ENCODE measurements at regions of chr1 and their contacts with region 1.

Region 1: DNA sequence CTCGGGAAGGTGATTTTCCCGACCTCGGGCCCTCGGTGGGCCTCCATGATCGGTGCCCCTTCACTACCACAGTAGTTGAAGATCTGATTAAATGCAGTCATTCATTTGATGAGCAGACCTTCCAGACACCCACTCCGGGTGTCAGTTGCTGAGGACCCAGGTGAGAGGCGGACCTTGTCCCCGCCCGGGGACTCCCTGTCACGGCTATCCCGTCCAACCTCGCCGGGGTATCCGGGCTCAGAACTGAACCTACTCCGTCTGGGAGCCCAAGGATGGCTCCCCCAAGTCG is 22.6 kb downstream of the RNU1-3 start:
- DNase-seq: no peak
- ATAC-seq: peak; percentile 18 to 30
- H3K4me3 ChIP-seq: peak overlapping the region; percentile 67 to 99 (median 75)
- H3K27ac ChIP-seq: peak overlapping the region; percentile 83 to 95 (median 86)
- H3K4me1 ChIP-seq: peaks cover 46 to 58% of the 10 kb centered on the region in 2 donors
- H3K27me3 ChIP-seq: peaks cover 0 to 9% (median 5%) of the 10 kb centered on the region in 3 donors
- CTCF ChIP-seq: no peak
- POLR2A ChIP-seq: no peak

Region 2: DNA sequence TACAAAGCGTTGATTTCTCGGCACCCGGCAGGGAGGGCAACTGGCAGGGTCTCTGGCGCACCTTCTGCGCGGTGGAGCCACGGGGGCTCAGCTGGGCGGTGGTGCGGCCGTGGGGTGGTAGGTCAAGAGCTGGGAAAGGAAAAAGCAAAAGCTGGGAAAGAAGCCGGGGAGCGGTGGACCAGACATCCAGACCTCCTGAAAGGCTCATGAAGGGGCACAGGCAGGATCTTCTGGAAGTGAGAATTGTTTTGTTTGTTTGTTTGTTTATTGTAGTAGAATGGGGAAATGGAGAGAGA is 122.9 kb before region 1 on chr1:
- in situ Hi-C with region 1: loop called in 1 of 4 experiments (anchors 25 kb)
- intact Hi-C with region 1: no loop called
- DNase-seq: no peak
- ATAC-seq: no peak
- H3K4me3 ChIP-seq: no peak overlapping the region
- H3K27ac ChIP-seq: no peak overlapping the region
- H3K4me1 ChIP-seq: peaks cover 0 to 4% of the 10 kb centered on the region in 2 donors
- H3K27me3 ChIP-seq: peaks cover 5 to 26% (median 15%) of the 10 kb centered on the region in 3 donors
- CTCF ChIP-seq: no peak
- POLR2A ChIP-seq: no peak

Region 3: GRCh38 chr1:16613185-16614147 is 30.7 kb before region 1 on chr1 and contains the start of gene NBPF1:
- in situ Hi-C with region 1: no loop called
- intact Hi-C with region 1: loop called (anchors 2 kb)
- DNase-seq: peak; percentile 92 to 96
- ATAC-seq: peak; percentile 95 to 96
- H3K4me3 ChIP-seq: peak within 1 kb of the TSS; percentile 57 to 82 (median 74)
- H3K27ac ChIP-seq: peak within 1 kb of the TSS; percentile 69 to 84 (median 78)
- H3K4me1 ChIP-seq: peaks cover 16 to 24% of the 10 kb centered on the region in 2 donors
- H3K27me3 ChIP-seq: no peaks in the 10 kb centered on the region
- CTCF ChIP-seq: peak in 2 of 5 experiments; percentile 13 to 17
- POLR2A ChIP-seq: peak; percentile 76 to 90
- total RNA-seq, gene NBPF1: 6.6 to 20.0 (median 11.2) TPM

Region 4: GRCh38 chr1:16904560-16905111 is 260.5 kb after region 1 on chr1:
- in situ Hi-C with region 1: no loop called
- intact Hi-C with region 1: loop called (anchors 5 kb)
- DNase-seq: peak; percentile 100
- ATAC-seq: peak; percentile 96 to 98
- H3K4me3 ChIP-seq: peak overlapping the region; percentile 64 to 79 (median 69)
- H3K27ac ChIP-seq: peak overlapping the region; percentile 88 to 98 (median 93)
- H3K4me1 ChIP-seq: peaks cover 13 to 16% of the 10 kb centered on the region in 2 donors
- H3K27me3 ChIP-seq: no peaks in the 10 kb centered on the region
- CTCF ChIP-seq: no peak
- POLR2A ChIP-seq: no peak

Region 5: GRCh38 chr1:17287130-17287776 is 643.1 kb after region 1 on chr1:
- in situ Hi-C with region 1: no loop called
- intact Hi-C with region 1: no loop called
- DNase-seq: no peak
- ATAC-seq: no peak
- H3K4me3 ChIP-seq: no peak overlapping the region
- H3K27ac ChIP-seq: no peak overlapping the region
- H3K4me1 ChIP-seq: no peaks in the 10 kb centered on the region
- H3K27me3 ChIP-seq: peaks cover 0 to 27% (median 7%) of the 10 kb centered on the region in 3 donors
- CTCF ChIP-seq: no peak
- POLR2A ChIP-seq: no peak